CD14-positive monocyte (primary cell): ENCODE measurements at regions of chr14 and their contacts with region 1.

Region 1: GRCh38 chr14:75293920-75294642 is 15.5 kb downstream of the FOS start:
- DNase-seq: peak; percentile 96 to 98 (median 98)
- H3K4me3 ChIP-seq: peak overlapping the region; percentile 69 to 89 (median 85)
- H3K4me3 Mint-ChIP-seq: peak overlapping the region; percentile 82 to 86
- H3K27ac ChIP-seq: peak overlapping the region; percentile 98
- H3K27ac Mint-ChIP-seq: peak overlapping the region; percentile 99 to 100 (median 100)
- H3K4me1 ChIP-seq: peaks cover 63 to 70% of the 10 kb centered on the region in 2 donors
- H3K4me1 Mint-ChIP-seq: peaks cover 57% of the 10 kb centered on the region
- H3K27me3 ChIP-seq: no peaks in the 10 kb centered on the region
- H3K27me3 Mint-ChIP-seq: peaks cover 0 to 5% (median 2%) of the 10 kb centered on the region in 3 donors
- CTCF ChIP-seq: no peak

Region 2: GRCh38 chr14:74941676-74942151 is 352.4 kb before region 1 on chr14:
- intact Hi-C with region 1: no loop called
- DNase-seq: peak; percentile 65 to 78 (median 70)
- H3K4me3 ChIP-seq: peak overlapping the region in 2 of 3 experiments; percentile 20 to 42
- H3K4me3 Mint-ChIP-seq: peak overlapping the region; percentile 69 to 87
- H3K27ac ChIP-seq: peak overlapping the region; percentile 84 to 92
- H3K27ac Mint-ChIP-seq: peak overlapping the region; percentile 94 to 97 (median 96)
- H3K4me1 ChIP-seq: peaks cover 56 to 60% of the 10 kb centered on the region in 2 donors
- H3K4me1 Mint-ChIP-seq: peaks cover 64% of the 10 kb centered on the region
- H3K27me3 ChIP-seq: no peaks in the 10 kb centered on the region
- H3K27me3 Mint-ChIP-seq: peaks cover 1 to 6% (median 5%) of the 10 kb centered on the region in 3 donors
- CTCF ChIP-seq: no peak

Region 3: DNA sequence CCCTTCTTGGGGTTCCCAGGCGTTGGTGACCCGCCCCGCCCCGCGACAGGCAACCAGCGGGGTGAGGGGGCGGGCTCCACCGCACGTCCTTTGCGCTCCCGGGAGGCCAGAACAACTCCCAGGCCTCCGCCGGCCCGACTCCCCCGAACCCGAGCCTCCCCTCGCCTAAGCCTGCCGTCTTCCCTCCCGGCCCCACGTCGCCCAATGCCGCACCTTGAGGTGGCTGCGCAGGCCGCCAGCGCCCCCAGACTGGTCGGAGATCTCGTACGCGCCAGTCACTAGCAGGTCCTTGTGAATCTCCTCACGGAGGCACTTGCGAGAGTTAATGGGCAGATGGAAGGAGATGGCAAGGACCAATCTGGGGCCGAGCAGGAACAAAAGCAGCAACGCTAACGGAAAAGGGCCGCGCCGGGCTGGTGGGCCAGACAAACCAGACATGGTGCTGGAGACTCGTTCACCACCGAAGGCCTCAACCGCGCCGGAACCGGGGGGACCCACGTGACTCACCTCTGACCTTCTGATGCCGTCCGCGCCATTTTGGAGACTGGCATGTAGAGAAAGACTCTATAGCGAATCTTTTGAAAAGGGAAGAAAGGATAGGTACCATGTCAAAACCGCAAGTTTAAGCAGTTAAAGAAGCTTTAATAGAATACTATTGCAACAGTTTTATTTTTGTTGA is 117.8 kb before region 1 on chr14 and contains the start of gene TMED10:
- intact Hi-C with region 1: loop called (anchors 5 kb)
- DNase-seq: peak; percentile 46 to 88 (median 87)
- H3K4me3 ChIP-seq: peak within 1 kb of the TSS; percentile 75 to 92 (median 78)
- H3K4me3 Mint-ChIP-seq: peak within 1 kb of the TSS; percentile 91 to 95
- H3K27ac ChIP-seq: peak within 1 kb of the TSS; percentile 95 to 97
- H3K27ac Mint-ChIP-seq: peak within 1 kb of the TSS; percentile 96 to 99 (median 99)
- H3K4me1 ChIP-seq: peaks cover 41 to 57% of the 10 kb centered on the region in 2 donors
- H3K4me1 Mint-ChIP-seq: peaks cover 45% of the 10 kb centered on the region
- H3K27me3 ChIP-seq: no peaks in the 10 kb centered on the region
- H3K27me3 Mint-ChIP-seq: peaks cover 0 to 3% (median 0%) of the 10 kb centered on the region in 3 donors
- CTCF ChIP-seq: no peak
- polyA plus RNA-seq, gene TMED10: 98.5 to 243 (median 233) TPM

Region 4: DNA sequence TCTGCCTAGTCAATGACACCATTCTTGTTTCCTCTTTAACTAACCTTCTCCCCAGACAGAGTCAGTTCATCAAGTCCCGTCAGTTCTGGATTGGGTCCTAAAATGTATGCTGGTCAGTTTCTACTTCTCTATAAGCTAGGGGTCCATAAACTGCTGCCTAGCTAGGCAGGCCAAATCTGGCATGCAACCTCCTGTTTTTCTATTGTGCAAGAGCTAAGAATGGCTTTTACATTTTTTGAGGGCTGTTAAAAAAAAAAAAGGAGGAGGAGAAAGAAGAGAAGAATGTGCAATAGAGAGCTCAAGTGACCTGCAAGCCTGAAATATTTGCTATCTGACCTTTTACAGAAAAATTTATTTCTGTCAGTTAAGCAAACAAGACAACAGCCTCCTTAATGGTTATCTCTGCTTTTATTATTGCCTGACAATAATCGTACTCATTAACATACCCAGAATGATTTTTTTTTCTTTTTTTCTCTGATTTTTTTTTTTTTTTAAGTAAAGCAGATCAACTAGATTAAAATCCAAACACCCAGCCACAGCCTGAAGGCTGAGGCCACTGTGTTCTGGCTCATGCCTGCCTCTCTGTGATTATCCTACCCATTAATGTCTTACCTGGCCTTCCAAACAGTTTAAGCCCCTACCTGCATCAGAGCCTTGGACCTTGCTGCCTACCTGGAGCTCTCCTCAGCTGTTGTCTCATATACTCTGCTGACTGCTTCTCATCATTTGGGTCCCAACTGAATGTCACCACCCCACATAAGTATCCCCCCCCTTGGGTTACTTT is 111.0 kb before region 1 on chr14:
- intact Hi-C with region 1: loop called (anchors 5 kb)
- DNase-seq: peak; percentile 62 to 87 (median 67)
- H3K4me3 ChIP-seq: peak overlapping the region in 1 of 3 experiments; percentile 2
- H3K4me3 Mint-ChIP-seq: peak overlapping the region in 1 of 2 donors; percentile 7
- H3K27ac ChIP-seq: peak overlapping the region; percentile 61 to 84
- H3K27ac Mint-ChIP-seq: peak overlapping the region; percentile 86 to 97 (median 93)
- H3K4me1 ChIP-seq: peaks cover 70 to 77% of the 10 kb centered on the region in 2 donors
- H3K4me1 Mint-ChIP-seq: peaks cover 69% of the 10 kb centered on the region
- H3K27me3 ChIP-seq: no peaks in the 10 kb centered on the region
- H3K27me3 Mint-ChIP-seq: peaks cover 0 to 8% (median 0%) of the 10 kb centered on the region in 3 donors
- CTCF ChIP-seq: no peak

Region 5: DNA sequence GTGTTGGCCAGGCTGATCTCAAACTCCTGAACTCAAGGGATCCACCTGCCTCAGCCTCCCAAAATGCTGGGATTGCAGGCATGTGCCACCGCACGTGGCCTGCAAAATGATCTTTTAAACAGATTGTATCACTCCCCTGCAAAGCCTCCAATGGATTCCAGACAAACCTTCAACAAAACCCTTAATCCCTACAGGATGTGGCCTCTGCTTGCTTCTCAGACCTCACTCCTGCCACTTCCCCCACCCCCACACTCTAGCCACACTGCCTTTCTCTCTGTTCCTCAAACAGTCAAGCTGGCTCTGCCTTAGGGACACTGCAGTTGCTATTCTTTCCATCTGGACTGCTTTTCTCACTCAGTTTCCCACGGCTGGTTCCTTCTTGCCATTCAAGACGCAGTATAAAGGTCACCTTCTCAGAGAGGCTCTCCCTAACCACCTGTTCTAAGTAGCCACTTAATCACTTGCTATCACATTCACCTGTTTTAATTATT is 70.4 kb before region 1 on chr14:
- intact Hi-C with region 1: loop called in 1 of 2 experiments (anchors 2 kb)
- DNase-seq: peak; percentile 47 to 70 (median 62)
- H3K4me3 ChIP-seq: no peak overlapping the region
- H3K4me3 Mint-ChIP-seq: peak overlapping the region in 1 of 2 donors; percentile 64
- H3K27ac ChIP-seq: no peak overlapping the region
- H3K27ac Mint-ChIP-seq: peak overlapping the region; percentile 65 to 84 (median 83)
- H3K4me1 ChIP-seq: peaks cover 52 to 62% of the 10 kb centered on the region in 2 donors
- H3K4me1 Mint-ChIP-seq: peaks cover 46% of the 10 kb centered on the region
- H3K27me3 ChIP-seq: no peaks in the 10 kb centered on the region
- H3K27me3 Mint-ChIP-seq: peaks cover 0 to 3% (median 0%) of the 10 kb centered on the region in 3 donors
- CTCF ChIP-seq: no peak

Region 6: GRCh38 chr14:75258615-75259466 is 35.2 kb before region 1 on chr14:
- intact Hi-C with region 1: loop called in 1 of 2 experiments (anchors 2 kb)
- DNase-seq: peak; percentile 100
- H3K4me3 ChIP-seq: peak overlapping the region; percentile 31 to 64 (median 39)
- H3K4me3 Mint-ChIP-seq: peak overlapping the region; percentile 79 to 92
- H3K27ac ChIP-seq: peak overlapping the region; percentile 98 to 100
- H3K27ac Mint-ChIP-seq: peak overlapping the region; percentile 99 to 100 (median 100)
- H3K4me1 ChIP-seq: peaks cover 30 to 44% of the 10 kb centered on the region in 2 donors
- H3K4me1 Mint-ChIP-seq: peaks cover 51% of the 10 kb centered on the region
- H3K27me3 ChIP-seq: no peaks in the 10 kb centered on the region
- H3K27me3 Mint-ChIP-seq: peaks cover 0 to 2% (median 1%) of the 10 kb centered on the region in 3 donors
- CTCF ChIP-seq: peak; percentile 2

Region 7: GRCh38 chr14:75278422-75279161 is 15.5 kb before region 1 on chr14 and contains the start of gene FOS:
- intact Hi-C with region 1: loop called (anchors 1 kb)
- DNase-seq: peak; percentile 95 to 97 (median 95)
- H3K4me3 ChIP-seq: peak within 1 kb of the TSS; percentile 80 to 100 (median 91)
- H3K4me3 Mint-ChIP-seq: peak within 1 kb of the TSS; percentile 95 to 100
- H3K27ac ChIP-seq: peak within 1 kb of the TSS; percentile 92 to 98
- H3K27ac Mint-ChIP-seq: peak within 1 kb of the TSS; percentile 98 to 100 (median 99)
- H3K4me1 ChIP-seq: peaks cover 54 to 64% of the 10 kb centered on the region in 2 donors
- H3K4me1 Mint-ChIP-seq: peaks cover 60% of the 10 kb centered on the region
- H3K27me3 ChIP-seq: no peaks in the 10 kb centered on the region
- H3K27me3 Mint-ChIP-seq: peaks cover 0 to 38% (median 7%) of the 10 kb centered on the region in 3 donors
- CTCF ChIP-seq: no peak
- polyA plus RNA-seq, gene FOS: 4,403 to 5,159 (median 4,841) TPM

Region 8: DNA sequence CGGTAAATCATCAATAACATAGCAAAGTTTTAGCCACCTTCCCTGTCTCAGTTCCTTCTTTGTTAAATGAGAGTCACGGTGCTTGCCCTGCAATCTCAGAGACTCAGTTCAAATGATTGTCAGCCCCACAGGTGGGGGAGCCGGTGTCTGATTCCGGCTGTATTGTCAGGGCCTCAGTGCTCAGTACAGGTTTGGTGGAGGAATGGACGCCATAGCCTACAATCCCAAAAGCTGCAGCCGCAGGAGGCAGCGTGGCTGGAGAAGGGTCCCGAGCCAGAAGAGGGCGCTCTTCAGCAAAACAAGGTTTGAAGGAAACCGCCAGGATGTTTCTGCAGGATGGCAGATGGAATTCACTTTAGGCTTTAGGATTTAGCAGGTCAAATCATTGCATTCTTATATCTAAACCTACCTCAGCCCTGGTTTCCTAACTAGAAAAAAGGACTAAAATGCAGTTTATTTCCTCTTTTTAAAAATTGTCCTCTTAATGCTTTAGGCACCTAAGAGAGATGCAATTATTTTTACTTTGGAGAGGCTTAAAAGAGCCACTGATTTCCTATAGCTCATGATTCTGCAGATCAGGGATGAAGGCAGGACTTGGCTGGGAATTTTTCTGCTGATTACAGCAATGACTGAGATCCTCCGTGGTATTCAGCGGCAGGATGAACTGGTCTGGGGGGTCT is 13.8 kb after region 1 on chr14:
- intact Hi-C with region 1: loop called in 1 of 2 experiments (anchors 1 kb)
- DNase-seq: peak; percentile 68 to 79 (median 77)
- H3K4me3 ChIP-seq: no peak overlapping the region
- H3K4me3 Mint-ChIP-seq: no peak overlapping the region
- H3K27ac ChIP-seq: no peak overlapping the region
- H3K27ac Mint-ChIP-seq: peak overlapping the region in 4 of 7 donors; percentile 36 to 83 (median 73)
- H3K4me1 ChIP-seq: peaks cover 23 to 27% of the 10 kb centered on the region in 2 donors
- H3K4me1 Mint-ChIP-seq: peaks cover 41% of the 10 kb centered on the region
- H3K27me3 ChIP-seq: no peaks in the 10 kb centered on the region
- H3K27me3 Mint-ChIP-seq: no peaks in the 10 kb centered on the region
- CTCF ChIP-seq: peak; percentile 87

Region 9: DNA sequence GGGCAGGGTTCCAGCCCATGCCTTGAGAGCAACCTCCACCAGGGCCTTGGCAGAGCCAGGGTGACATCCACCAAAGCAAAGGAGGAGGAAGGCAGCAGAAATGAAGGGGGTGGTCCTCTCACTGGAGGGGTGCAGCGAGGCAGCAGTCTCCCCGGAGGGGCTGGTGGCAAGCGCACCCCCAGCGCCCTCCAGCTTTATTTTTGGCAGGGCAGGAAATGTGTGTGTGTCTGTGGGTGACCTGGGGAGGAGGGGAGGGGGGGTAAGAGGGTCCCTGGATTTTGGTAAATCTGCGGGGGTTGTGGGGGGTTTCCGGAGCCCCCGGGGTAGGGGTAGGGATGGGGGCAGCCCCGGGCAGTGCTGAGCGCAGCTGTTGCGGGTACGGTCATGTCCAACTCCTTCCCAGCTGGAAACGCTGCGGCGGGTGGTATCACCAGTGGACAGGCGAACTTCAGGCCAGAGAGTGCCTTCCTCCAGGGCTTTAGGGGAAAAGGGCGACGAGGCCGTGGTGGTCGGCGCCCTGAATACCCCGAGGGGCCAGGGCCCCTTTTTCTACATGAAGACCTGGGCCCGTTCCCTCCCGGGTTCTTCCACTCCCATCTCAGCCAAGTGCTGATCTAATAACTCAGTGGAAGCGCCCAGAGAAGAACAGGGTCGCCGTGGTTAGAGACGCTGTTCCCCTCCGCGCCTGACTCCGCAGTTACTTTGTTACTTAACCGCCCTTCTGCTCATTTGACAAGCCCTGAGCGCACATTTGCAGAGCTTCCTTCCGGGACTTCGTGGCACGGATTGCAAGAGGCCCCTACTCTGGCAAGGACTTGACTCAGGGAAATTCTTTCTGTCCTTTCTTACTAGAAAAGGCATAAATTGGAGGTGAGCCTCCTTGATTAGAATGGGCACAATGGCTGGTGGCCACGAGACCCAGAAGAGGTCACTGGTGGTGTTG is 39.8 kb after region 1 on chr14:
- intact Hi-C with region 1: no loop called
- DNase-seq: peak; percentile 81 to 85 (median 83)
- H3K4me3 ChIP-seq: peak overlapping the region; percentile 44 to 71 (median 48)
- H3K4me3 Mint-ChIP-seq: peak overlapping the region; percentile 86 to 94
- H3K27ac ChIP-seq: peak overlapping the region; percentile 98 to 99
- H3K27ac Mint-ChIP-seq: peak overlapping the region; percentile 96 to 99 (median 98)
- H3K4me1 ChIP-seq: peaks cover 79 to 84% of the 10 kb centered on the region in 2 donors
- H3K4me1 Mint-ChIP-seq: peaks cover 75% of the 10 kb centered on the region
- H3K27me3 ChIP-seq: no peaks in the 10 kb centered on the region
- H3K27me3 Mint-ChIP-seq: peaks cover 0 to 3% (median 2%) of the 10 kb centered on the region in 3 donors
- CTCF ChIP-seq: no peak

Region 10: DNA sequence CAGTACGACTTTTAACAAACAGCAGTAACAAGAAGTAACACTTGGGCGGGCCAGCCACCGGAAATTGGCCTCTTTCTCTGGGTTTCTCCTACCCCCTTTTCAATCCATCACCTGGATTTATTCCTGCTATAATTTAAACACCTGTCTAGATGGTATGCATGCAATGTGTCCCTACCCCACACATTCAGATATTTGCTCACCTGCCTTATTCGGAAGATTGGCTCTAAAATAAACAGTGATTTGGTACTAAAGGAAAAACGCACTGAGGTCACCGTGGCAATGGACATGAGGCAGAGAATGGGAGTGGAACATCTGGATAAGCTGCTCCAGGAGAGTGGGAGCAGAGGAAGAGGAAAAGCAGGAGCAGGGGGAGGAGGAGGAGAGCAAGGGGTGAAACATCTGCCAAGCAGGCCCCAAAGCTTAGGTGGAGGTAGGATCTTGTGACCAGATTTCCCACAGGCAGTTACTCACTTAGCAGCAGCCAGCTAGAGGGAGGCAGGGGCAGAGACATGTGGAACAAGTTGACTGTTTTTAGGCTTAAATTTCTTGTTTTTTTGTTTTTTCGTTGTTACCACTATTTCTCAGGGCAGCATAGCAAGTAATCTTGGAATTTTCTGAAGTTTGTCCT is 517.9 kb after region 1 on chr14:
- intact Hi-C with region 1: no loop called
- DNase-seq: no peak
- H3K4me3 ChIP-seq: no peak overlapping the region
- H3K4me3 Mint-ChIP-seq: no peak overlapping the region
- H3K27ac ChIP-seq: no peak overlapping the region
- H3K27ac Mint-ChIP-seq: no peak overlapping the region
- H3K4me1 ChIP-seq: no peaks in the 10 kb centered on the region
- H3K4me1 Mint-ChIP-seq: no peaks in the 10 kb centered on the region
- H3K27me3 ChIP-seq: no peaks in the 10 kb centered on the region
- H3K27me3 Mint-ChIP-seq: no peaks in the 10 kb centered on the region
- CTCF ChIP-seq: no peak